Activated T-helper 1 cell treated with anti-CD3 and anti-CD28 coated beads, Interleukin-12 subunit alpha, Interleukin-12 subunit beta, Interleukin-2, Interleukin-4 antibody, amounts not matched to agents 30 ng/mL and 10 ng/mL and 1 ng/mL, durations not matched to agents 14 hours and 24 hours and 36 hours (primary cell): ENCODE measurements at regions of chr4 and their contacts with region 1.

Region 1: GRCh38 chr4:40908702-40909362 is 159.1 kb downstream of the NSUN7 start:
- DNase-seq: peak; percentile 61
- H3K4me3 Mint-ChIP-seq: peak overlapping the region; percentile 43
- H3K27ac Mint-ChIP-seq: peak overlapping the region; percentile 91
- H3K4me1 Mint-ChIP-seq: peaks cover 34% of the 10 kb centered on the region
- H3K27me3 Mint-ChIP-seq: no peaks in the 10 kb centered on the region

Region 2: GRCh38 chr4:40515398-40516293 is 393.2 kb before region 1 on chr4:
- intact Hi-C with region 1: loop called (anchors 10 kb)
- DNase-seq: no peak
- H3K4me3 Mint-ChIP-seq: no peak overlapping the region
- H3K27ac Mint-ChIP-seq: peak overlapping the region; percentile 74
- H3K4me1 Mint-ChIP-seq: peaks cover 42% of the 10 kb centered on the region
- H3K27me3 Mint-ChIP-seq: peaks cover 3% of the 10 kb centered on the region

Region 3: GRCh38 chr4:40662962-40663604 is 245.7 kb before region 1 on chr4:
- intact Hi-C with region 1: loop called (anchors 2 kb)
- DNase-seq: no peak
- H3K4me3 Mint-ChIP-seq: no peak overlapping the region
- H3K27ac Mint-ChIP-seq: peak overlapping the region; percentile 81
- H3K4me1 Mint-ChIP-seq: peaks cover 31% of the 10 kb centered on the region
- H3K27me3 Mint-ChIP-seq: peaks cover 1% of the 10 kb centered on the region

Region 4: GRCh38 chr4:40924096-40924792 is 15.4 kb after region 1 on chr4:
- intact Hi-C with region 1: loop called (anchors 1 kb)
- DNase-seq: peak; percentile 45
- H3K4me3 Mint-ChIP-seq: no peak overlapping the region
- H3K27ac Mint-ChIP-seq: peak overlapping the region; percentile 77
- H3K4me1 Mint-ChIP-seq: peaks cover 19% of the 10 kb centered on the region
- H3K27me3 Mint-ChIP-seq: peaks cover 10% of the 10 kb centered on the region

Region 5: GRCh38 chr4:40962551-40963180 is 53.8 kb after region 1 on chr4:
- intact Hi-C with region 1: no loop called
- DNase-seq: no peak
- H3K4me3 Mint-ChIP-seq: no peak overlapping the region
- H3K27ac Mint-ChIP-seq: no peak overlapping the region
- H3K4me1 Mint-ChIP-seq: no peaks in the 10 kb centered on the region
- H3K27me3 Mint-ChIP-seq: peaks cover 5% of the 10 kb centered on the region

Region 6: GRCh38 chr4:41934815-41935651 is 1026.2 kb after region 1 on chr4 and contains the start of gene TMEM33:
- intact Hi-C with region 1: loop called (anchors 5 kb)
- DNase-seq: peak; percentile 69
- H3K4me3 Mint-ChIP-seq: peak within 1 kb of the TSS; percentile 99
- H3K27ac Mint-ChIP-seq: peak within 1 kb of the TSS; percentile 93
- H3K4me1 Mint-ChIP-seq: peaks cover 59% of the 10 kb centered on the region
- H3K27me3 Mint-ChIP-seq: no peaks in the 10 kb centered on the region
- total RNA-seq, gene TMEM33: 97.8 and 106 TPM in 2 replicates